Activated naive CD4-positive, alpha-beta T cell treated with anti-CD3 and anti-CD28 coated beads for 36 hours (primary cell): ENCODE measurements at regions of chr14 and their contacts with region 1.

Region 1: DNA sequence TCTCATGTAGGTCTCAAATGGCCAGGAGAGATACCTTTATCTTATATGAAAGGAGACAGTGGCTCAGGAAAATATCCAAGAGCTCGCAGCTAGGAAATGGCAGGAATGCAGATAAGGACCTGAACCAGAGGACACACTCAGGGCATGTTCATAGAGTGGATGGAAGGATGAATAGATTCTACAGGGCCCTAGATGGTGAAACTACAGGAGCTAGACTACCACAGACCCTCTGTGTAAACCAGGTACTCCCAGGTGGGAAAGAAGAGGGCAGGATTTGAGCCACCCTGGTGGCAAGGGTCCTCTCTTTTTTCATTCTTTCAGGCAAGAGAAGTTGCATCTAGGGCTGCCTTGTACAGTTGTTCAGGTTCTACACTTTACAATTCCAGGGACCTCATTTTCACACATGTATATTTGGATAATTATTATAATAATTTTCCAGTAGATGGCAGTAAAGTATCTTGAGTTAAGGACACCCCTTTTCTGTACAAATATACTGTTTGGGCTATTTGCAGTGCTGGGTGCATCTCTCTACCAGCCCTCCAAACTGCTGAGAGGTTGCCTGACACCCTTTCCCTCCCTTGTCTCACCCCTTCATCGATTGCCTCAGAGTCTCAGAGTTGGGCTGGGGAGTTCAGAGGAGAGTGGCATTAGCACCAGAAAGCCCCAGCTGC is 10.5 kb upstream of the ZDHHC22 start:
- DNase-seq: no peak
- H3K4me3 Mint-ChIP-seq: no peak overlapping the region
- H3K27ac Mint-ChIP-seq: no peak overlapping the region
- H3K4me1 Mint-ChIP-seq: no peaks in the 10 kb centered on the region
- H3K27me3 Mint-ChIP-seq: peaks cover 25% of the 10 kb centered on the region

Region 2: DNA sequence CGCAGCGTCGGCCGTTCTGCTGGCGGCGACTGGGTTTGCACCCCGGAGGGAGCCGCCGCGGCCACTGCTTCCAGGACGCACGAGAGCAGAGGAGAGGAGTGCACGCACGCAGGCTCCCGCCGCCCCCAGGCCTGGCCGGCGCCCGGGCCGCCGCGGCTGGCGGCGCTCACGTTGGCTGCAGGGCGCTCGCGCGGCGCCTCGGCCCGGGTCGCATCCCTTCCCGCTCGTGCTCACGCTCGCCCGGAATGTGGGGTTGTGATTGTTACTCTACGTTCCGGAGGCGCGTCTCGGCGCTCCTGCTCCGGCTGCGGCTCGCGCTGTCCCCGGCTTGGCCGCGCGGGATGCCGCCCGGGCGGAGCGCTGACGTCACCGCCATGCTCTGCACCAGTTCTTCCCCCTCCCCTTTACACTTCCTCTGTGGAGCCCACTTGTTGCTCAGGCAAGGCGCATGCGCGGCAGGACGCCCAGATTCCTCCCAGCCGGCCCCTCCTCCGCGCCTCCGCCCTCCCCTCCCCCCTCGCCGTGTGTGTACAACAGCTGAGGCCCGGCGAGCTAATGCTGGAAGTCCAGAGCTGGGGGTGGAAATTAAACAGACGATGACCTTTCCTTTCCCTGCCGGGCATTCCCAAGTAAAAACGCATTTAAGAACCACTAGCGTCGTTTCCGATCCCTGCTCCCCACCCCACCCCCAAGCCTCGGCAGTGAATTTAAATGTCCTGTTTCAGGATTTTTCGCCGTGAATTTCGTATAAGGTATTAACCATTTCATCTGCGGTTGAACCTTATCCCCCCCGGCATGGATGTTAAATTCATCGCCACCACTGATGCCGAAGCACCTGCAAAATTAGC is 123.4 kb before region 1 on chr14 and contains the start of gene IRF2BPL:
- CTCF ChIA-PET with region 1: no interaction called
- intact Hi-C with region 1: no loop called
- DNase-seq: peak; percentile 96
- H3K4me3 Mint-ChIP-seq: peak within 1 kb of the TSS; percentile 82
- H3K27ac Mint-ChIP-seq: peak within 1 kb of the TSS; percentile 94
- H3K4me1 Mint-ChIP-seq: peaks cover 57% of the 10 kb centered on the region
- H3K27me3 Mint-ChIP-seq: no peaks in the 10 kb centered on the region
- total RNA-seq, gene IRF2BPL: 34.8 to 35.2 TPM

Region 3: DNA sequence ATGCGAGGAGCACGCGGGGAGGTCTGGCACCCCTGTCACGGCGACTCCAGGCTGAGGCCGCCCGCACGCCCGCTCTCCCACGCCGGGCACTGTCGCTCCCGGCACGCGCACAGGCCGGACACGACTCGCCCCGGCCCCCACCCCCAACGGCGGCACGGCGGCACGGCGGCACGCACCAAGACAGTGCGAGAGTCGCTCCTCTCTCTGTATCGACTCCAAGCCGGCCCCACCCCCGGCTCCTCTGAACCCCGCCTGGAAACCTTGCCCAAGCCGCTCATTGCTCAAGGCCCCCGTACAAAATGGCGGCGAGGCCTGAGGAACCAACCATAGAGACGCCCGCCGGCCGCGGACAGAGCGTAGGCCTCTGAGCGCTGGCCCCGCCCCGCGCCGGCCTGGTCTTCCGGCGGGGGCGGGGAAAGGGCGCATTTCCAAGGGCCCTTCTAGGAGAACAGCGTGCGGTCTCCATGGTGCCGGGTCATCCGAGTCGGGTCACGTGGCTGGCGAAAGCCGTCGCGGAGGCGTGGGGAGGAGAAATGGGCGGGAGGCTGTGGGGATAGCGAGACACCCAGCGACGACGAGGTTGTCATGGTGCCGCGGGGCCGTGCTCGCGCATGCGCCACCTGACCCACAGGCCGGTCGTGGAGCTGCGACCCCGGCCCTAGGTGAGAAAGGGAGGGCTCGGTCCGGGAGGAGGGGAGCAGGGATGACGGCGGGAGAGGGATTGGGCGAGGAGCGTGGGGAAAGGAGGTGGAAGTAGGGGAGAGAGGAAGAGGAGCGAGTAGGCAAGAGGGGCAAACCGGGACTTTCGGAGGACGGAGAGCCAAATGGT is 54.1 kb before region 1 on chr14 and contains the start of gene CIPC:
- CTCF ChIA-PET with region 1: no interaction called
- intact Hi-C with region 1: no loop called
- DNase-seq: peak; percentile 100
- H3K4me3 Mint-ChIP-seq: peak within 1 kb of the TSS; percentile 88
- H3K27ac Mint-ChIP-seq: peak within 1 kb of the TSS; percentile 96
- H3K4me1 Mint-ChIP-seq: peaks cover 38% of the 10 kb centered on the region
- H3K27me3 Mint-ChIP-seq: no peaks in the 10 kb centered on the region
- total RNA-seq, gene CIPC: 5.6 to 6.1 TPM

Region 4: DNA sequence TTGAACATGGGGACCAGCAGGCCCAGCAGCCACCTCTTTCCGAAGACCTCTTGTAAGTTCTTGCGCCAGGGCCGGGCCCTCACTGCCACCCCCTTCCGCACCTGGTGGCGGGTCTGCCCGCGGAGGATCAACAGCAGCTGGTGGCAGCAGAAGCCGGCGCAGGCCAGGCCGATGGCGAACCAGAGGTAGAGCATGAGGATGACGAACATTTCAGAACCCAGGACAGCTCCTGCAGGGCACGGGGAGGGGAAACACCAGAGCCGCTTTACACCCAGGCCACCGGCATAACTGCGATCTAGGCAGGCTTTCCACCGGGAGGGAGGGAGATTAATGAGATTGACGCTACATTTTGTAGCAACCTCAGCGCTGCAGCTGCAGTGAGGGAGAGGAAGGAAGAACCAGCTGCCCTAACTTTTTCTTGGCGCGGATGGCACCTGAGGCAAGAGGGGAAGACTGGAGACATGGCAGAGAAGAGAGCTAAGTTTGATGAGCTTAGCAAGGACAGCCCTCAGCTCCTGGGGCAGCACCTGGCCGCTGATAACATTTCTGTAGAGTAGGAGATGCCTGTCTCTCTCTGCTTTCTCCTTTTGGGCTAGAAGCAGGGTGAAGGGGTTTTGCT is 18.2 kb before region 1 on chr14:
- CTCF ChIA-PET with region 1: interaction called, 35 read pairs
- intact Hi-C with region 1: no loop called
- DNase-seq: peak; percentile 85
- H3K4me3 Mint-ChIP-seq: no peak overlapping the region
- H3K27ac Mint-ChIP-seq: no peak overlapping the region
- H3K4me1 Mint-ChIP-seq: no peaks in the 10 kb centered on the region
- H3K27me3 Mint-ChIP-seq: peaks cover 57% of the 10 kb centered on the region

Region 5: GRCh38 chr14:77139540-77140358 is 12.3 kb before region 1 on chr14:
- CTCF ChIA-PET with region 1: interaction called, 35 read pairs
- intact Hi-C with region 1: no loop called
- DNase-seq: peak; percentile 60
- H3K4me3 Mint-ChIP-seq: no peak overlapping the region
- H3K27ac Mint-ChIP-seq: no peak overlapping the region
- H3K4me1 Mint-ChIP-seq: peaks cover 20% of the 10 kb centered on the region
- H3K27me3 Mint-ChIP-seq: peaks cover 68% of the 10 kb centered on the region

Region 6: DNA sequence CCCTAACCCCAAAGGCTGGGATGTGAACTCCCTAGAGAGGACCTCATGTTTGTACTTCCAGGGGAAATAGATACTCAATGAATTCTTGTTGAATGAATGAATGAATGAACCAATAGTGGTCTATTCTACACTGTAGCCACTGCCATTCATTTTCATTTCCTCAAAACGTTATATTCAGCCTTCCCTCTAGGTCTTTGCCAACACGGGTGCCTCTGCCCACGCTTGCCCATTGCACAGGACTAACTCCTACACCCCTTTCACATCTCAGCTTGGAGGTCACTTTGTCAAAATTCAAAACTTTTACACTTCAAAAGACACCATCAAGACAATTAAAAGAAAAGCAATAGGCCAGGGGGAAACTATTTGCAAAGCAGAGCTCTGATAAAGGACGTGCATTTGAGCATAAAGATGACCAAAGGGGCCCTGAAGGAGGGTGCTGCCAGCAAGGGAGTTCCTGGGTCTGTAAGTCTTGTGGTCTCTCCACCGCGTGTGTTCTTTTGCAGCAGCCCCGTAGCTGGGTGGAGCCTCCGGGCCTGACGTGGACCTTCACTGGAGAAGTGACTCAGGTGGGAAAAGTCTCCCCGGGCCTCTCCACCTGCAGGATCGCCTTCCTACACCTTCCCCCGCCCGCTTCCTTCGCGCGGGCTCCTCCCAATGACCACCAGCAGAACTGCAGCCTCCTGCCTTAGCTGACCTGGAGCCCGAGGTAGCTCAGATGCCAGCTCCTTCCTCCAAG is 61.1 kb after region 1 on chr14:
- CTCF ChIA-PET with region 1: interaction called, 10 read pairs
- intact Hi-C with region 1: loop called (anchors 1 kb)
- DNase-seq: peak; percentile 60
- H3K4me3 Mint-ChIP-seq: no peak overlapping the region
- H3K27ac Mint-ChIP-seq: no peak overlapping the region
- H3K4me1 Mint-ChIP-seq: no peaks in the 10 kb centered on the region
- H3K27me3 Mint-ChIP-seq: peaks cover 11% of the 10 kb centered on the region

Region 7: GRCh38 chr14:77554207-77554606 is 402.2 kb after region 1 on chr14:
- CTCF ChIA-PET with region 1: interaction called, 5 read pairs
- intact Hi-C with region 1: loop called (anchors 5 kb)
- DNase-seq: no peak
- H3K4me3 Mint-ChIP-seq: no peak overlapping the region
- H3K27ac Mint-ChIP-seq: peak overlapping the region; percentile 58
- H3K4me1 Mint-ChIP-seq: peaks cover 12% of the 10 kb centered on the region
- H3K27me3 Mint-ChIP-seq: no peaks in the 10 kb centered on the region